Activated B cell treated with CpG ODN at 0.5 μM for 24 hours (primary cell): ENCODE measurements at regions of chr4 and their contacts with region 1.

Region 1: DNA sequence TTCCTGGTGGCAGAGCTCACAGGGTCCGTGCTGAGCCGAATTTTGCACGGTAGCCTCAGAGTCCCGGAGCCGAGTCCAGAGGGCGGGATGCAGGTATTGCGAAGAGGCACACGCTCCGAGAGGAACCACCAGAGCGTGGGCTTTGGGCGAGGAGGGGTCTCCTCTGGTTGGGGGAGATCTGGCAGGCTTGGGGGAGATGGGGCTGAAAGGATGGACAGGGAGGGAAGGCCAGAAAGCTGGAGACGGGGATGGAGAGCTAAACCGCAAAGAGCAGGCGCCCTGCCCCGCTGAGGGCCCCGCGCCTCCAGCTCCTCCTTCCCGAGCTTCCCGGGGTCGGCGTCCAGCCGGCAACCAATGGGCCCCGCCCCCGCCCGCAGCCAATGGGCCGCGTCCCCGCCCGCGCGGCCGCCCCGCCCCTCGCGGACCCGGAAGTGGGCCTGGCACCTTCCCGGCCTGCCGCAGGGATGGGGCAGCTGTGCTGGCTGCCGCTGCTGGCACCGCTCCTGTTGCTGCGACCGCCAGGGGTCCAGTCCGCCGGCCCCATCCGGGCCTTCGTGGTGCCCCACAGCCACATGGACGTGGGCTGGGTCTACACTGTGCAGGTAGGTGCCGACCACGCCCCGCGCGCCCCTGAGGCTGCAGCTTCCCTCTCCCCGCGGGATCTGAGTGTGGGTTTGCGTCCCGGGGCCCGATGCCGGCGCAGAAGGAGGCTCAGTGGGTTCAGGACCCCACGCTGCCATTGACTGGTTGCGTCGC is at the start of gene MAN2B2:
- DNase-seq: peak; percentile 86
- ATAC-seq: peak; percentile 96
- H3K4me3 Mint-ChIP-seq: peak within 1 kb of the TSS; percentile 88
- H3K27ac Mint-ChIP-seq: peak within 1 kb of the TSS; percentile 74
- H3K4me1 Mint-ChIP-seq: peaks cover 14% of the 10 kb centered on the region
- H3K27me3 Mint-ChIP-seq: no peaks in the 10 kb centered on the region
- CTCF ChIP-seq: no peak
- total RNA-seq, gene MAN2B2: 24.2 and 24.7 TPM in 2 replicates

Region 2: GRCh38 chr4:6591313-6591712 is 16.4 kb after region 1 on chr4:
- CTCF ChIA-PET with region 1: no interaction called
- POLR2A ChIA-PET with region 1: no interaction called
- intact Hi-C with region 1: loop called (anchors 2 kb)
- DNase-seq: peak; percentile 28
- ATAC-seq: peak; percentile 89
- H3K4me3 Mint-ChIP-seq: no peak overlapping the region
- H3K27ac Mint-ChIP-seq: peak overlapping the region; percentile 61
- H3K4me1 Mint-ChIP-seq: peaks cover 16% of the 10 kb centered on the region
- H3K27me3 Mint-ChIP-seq: no peaks in the 10 kb centered on the region
- CTCF ChIP-seq: no peak